ENCODE measurements at regions of chr21 and their contacts with region 1.

Region 1: GRCh38 chr21:27700974-27701614 is 734.2 kb upstream of the ADAMTS5 start:
- DNase-seq: peak; percentile 1 to 62 (median 31)
- ATAC-seq: no peak
- H3K4me3 ChIP-seq: no peak overlapping the region
- H3K4me3 Mint-ChIP-seq: no peak overlapping the region
- H3K27ac ChIP-seq: no peak overlapping the region
- H3K27ac Mint-ChIP-seq: no peak overlapping the region
- H3K4me1 ChIP-seq: no peaks in the 10 kb centered on the region
- H3K4me1 Mint-ChIP-seq: peaks cover 3% of the 10 kb centered on the region
- H3K27me3 ChIP-seq: no peaks in the 10 kb centered on the region
- H3K27me3 Mint-ChIP-seq: no peaks in the 10 kb centered on the region
- CTCF ChIP-seq: no peak

Region 2: DNA sequence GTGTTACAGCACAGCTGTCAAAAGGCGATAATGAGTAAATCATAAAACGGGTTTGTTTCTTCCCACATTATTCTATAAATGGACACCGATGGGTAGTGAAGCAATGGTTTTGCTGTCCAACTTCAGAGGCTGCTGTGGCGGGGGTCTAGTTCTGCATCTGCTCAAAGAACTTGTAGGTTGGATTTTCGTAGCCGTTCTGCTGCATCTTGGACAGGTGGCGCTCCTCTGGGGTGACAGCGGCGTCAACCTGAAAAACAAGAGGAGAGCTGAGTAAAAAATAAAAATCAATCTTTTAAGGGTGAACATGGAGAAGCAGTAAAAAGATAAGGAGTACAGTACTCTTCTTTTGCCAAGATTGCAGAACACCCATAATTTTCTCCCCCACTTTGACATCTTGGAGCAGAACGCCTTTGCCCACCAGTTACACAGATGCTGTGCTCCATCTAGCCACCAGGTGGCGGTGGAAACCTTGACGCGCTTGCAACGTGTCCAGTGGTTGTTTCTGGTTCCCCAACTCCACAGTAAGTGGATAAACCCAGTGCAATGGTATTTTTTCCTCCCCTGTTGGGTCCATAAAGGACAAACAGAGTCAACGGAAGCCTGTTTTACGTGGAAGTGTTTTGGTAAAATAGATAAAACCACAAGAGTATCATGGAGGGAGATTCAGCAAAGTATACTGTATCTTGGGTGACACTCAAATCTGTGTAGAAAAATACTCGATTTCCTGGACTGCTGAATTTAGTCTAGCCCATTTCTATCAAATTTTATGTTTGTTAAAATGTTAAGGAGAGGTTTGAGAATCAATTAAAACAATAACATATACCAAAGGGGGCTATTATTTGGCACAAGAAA is 1819.3 kb before region 1 on chr21:
- CTCF ChIA-PET with region 1: no interaction called
- POLR2A ChIA-PET with region 1: no interaction called
- intact Hi-C with region 1: loop called in 1 of 2 experiments (anchors 5 kb)
- DNase-seq: peak; percentile 27 to 71 (median 53)
- ATAC-seq: peak; percentile 69
- H3K4me3 ChIP-seq: no peak overlapping the region
- H3K4me3 Mint-ChIP-seq: no peak overlapping the region
- H3K27ac ChIP-seq: no peak overlapping the region
- H3K27ac Mint-ChIP-seq: no peak overlapping the region
- H3K4me1 ChIP-seq: no peaks in the 10 kb centered on the region
- H3K4me1 Mint-ChIP-seq: no peaks in the 10 kb centered on the region
- H3K27me3 ChIP-seq: no peaks in the 10 kb centered on the region
- H3K27me3 Mint-ChIP-seq: no peaks in the 10 kb centered on the region
- CTCF ChIP-seq: peak; percentile 82

Region 3: GRCh38 chr21:26850108-26850643 is 850.9 kb before region 1 on chr21:
- CTCF ChIA-PET with region 1: no interaction called
- POLR2A ChIA-PET with region 1: no interaction called
- intact Hi-C with region 1: loop called (anchors 5 kb)
- DNase-seq: peak in 2 of 9 experiments; percentile 25 to 38
- ATAC-seq: no peak
- H3K4me3 ChIP-seq: no peak overlapping the region
- H3K4me3 Mint-ChIP-seq: no peak overlapping the region
- H3K27ac ChIP-seq: no peak overlapping the region
- H3K27ac Mint-ChIP-seq: no peak overlapping the region
- H3K4me1 ChIP-seq: peaks cover 17% of the 10 kb centered on the region
- H3K4me1 Mint-ChIP-seq: peaks cover 19% of the 10 kb centered on the region
- H3K27me3 ChIP-seq: peaks cover 3 to 4% of the 10 kb centered on the region in 2 experiments
- H3K27me3 Mint-ChIP-seq: peaks cover 45% of the 10 kb centered on the region
- CTCF ChIP-seq: no peak

Region 4: GRCh38 chr21:27674041-27674615 is 27.0 kb before region 1 on chr21:
- CTCF ChIA-PET with region 1: no interaction called
- POLR2A ChIA-PET with region 1: no interaction called
- intact Hi-C with region 1: no loop called
- DNase-seq: no peak
- ATAC-seq: no peak
- H3K4me3 ChIP-seq: no peak overlapping the region
- H3K4me3 Mint-ChIP-seq: no peak overlapping the region
- H3K27ac ChIP-seq: no peak overlapping the region
- H3K27ac Mint-ChIP-seq: no peak overlapping the region
- H3K4me1 ChIP-seq: no peaks in the 10 kb centered on the region
- H3K4me1 Mint-ChIP-seq: no peaks in the 10 kb centered on the region
- H3K27me3 ChIP-seq: no peaks in the 10 kb centered on the region
- H3K27me3 Mint-ChIP-seq: no peaks in the 10 kb centered on the region
- CTCF ChIP-seq: no peak

Measured in CD8-positive, alpha-beta T cell (primary cell).